H1 (cell line): ENCODE measurements at regions of chr7 and their contacts with region 1.

Region 1: DNA sequence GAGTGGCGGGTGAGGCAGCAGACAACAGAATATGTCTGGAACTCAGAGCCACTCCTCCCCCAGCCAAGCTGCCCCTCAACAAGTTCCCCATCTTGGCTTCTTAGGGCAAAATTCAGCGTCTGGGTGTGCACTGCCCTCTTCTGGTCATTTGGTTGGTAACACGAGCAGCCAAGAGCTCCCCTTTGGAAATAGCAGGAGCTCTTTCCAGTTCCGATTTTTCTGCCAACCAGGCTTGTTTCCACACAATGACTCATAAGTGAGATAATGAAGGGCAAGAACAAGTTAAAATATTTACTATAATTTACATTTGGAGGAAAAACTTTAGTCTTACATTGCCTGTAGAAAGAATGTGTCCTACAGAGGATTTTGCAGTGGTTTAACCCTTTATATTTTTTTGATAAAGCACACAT is 70.5 kb downstream of the ADCYAP1R1 start:
- DNase-seq: peak; percentile 74 to 75
- H3K4me3 ChIP-seq: no peak overlapping the region
- H3K27ac ChIP-seq: no peak overlapping the region
- H3K4me1 ChIP-seq: peaks cover 0 to 3% (median 1%) of the 10 kb centered on the region in 4 experiments; a peak in 4 of 7 replicates
- H3K27me3 ChIP-seq: no peaks in the 10 kb centered on the region; a peak in 2 of 7 replicates
- CTCF ChIP-seq: peak; percentile 68 to 95 (median 87)
- EP300 ChIP-seq: no peak
- POLR2A ChIP-seq: no peak
- RAD21 ChIP-seq: peak; percentile 93 to 96

Region 2: DNA sequence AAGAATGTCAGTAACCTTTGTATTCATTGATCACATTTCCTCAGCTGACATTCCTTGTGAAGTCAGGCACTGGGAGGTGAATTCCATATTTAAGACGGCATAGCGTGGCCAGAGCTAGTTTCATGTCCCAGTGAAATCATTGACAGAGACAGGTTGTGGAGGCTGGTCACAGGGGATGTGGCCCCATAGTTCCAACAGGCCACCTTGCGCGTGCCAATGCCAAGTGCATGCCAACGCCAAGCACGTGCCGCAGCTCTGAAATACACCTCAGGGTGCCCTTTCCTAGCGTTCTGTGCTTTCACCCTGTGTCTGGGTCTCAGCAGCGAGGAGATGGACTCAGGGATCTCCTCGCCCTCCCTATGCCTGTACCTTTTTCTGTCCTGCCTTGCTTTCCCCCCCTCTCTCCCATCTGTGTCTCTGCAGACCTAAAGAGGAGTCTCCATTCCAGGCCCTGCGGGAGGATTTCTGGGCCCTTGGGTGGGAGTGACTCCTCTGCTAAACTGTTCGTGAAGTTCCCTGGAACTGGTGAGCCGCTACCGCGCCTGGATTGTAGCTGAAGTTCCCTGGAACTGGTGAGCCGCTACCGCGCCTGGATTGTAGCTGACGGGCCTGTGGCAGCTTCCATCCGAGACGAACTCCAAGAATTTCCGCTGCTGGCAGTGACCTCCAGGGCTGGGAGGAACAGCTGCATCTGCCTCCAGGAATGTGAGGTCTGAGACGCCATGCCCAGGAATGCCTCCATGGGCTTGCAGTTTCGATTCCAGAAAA is 191.3 kb before region 1 on chr7:
- CTCF ChIA-PET with region 1: interaction called, 11 read pairs
- POLR2A ChIA-PET with region 1: no interaction called
- DNase-seq: peak in 1 of 2 experiments; percentile 37
- H3K4me3 ChIP-seq: no peak overlapping the region
- H3K27ac ChIP-seq: no peak overlapping the region
- H3K4me1 ChIP-seq: peaks cover 0 to 9% (median 6%) of the 10 kb centered on the region in 4 experiments; a peak in 6 of 7 replicates
- H3K27me3 ChIP-seq: 0 out of 7 replicates have a peak, but pooled peaks cover 0 to 8% (median 0%) of the 10 kb centered on the region in 4 experiments
- CTCF ChIP-seq: no peak
- EP300 ChIP-seq: no peak
- POLR2A ChIP-seq: no peak
- RAD21 ChIP-seq: no peak; a peak in 1 of 4 replicates

Region 3: DNA sequence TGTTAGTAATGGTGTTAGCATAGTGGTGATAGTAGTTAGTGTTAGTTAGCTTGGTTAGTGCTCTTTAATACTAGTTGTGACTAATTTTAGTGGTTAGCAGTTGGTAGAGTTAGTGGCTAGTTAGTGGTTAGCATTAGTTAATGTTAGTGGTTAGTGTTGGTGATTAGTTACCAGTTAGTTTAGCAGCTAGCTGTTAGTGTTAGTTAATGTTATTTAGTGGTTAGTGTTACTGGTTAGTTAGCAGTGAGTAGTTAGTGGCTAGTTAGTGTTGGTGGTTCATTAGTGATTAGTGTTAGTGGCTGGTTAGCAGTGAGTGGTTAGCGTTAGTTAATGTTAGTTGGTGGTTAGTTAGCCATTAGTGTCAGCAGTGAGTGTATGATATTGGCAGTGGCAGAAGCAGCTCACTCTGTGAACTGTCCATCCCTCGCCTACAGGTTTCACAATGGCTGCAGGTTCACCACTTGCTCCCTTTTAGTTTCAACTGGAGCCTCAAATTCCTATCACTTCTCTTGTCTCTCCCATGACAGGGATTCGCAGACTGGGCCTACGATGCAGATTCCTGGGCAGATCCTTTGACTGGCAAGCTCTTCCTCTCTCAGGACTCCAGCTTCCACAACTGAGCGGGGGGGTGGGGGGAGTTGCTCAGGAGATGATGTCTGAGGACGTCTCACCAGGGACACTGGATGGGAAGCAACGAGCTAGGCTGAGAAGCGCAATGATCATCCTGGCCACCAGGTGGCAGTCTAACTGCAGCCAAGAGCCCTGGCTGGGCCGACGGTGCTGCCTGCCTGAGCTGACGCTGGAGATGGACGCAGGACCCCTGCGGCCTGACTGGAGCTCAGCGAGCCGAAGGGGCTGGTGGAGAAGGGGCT is 139.4 kb before region 1 on chr7:
- CTCF ChIA-PET with region 1: interaction called, 517 read pairs
- POLR2A ChIA-PET with region 1: interaction called, 17 read pairs
- DNase-seq: peak; percentile 90 to 99
- H3K4me3 ChIP-seq: peak overlapping the region in 1 of 4 experiments; percentile 59; a peak in 1 of 8 replicates
- H3K27ac ChIP-seq: no peak overlapping the region
- H3K4me1 ChIP-seq: peaks cover 13 to 41% (median 30%) of the 10 kb centered on the region in 4 experiments
- H3K27me3 ChIP-seq: peaks cover 0 to 7% (median 2%) of the 10 kb centered on the region in 4 experiments; a peak in 3 of 7 replicates
- CTCF ChIP-seq: peak; percentile 94 to 99 (median 99)
- EP300 ChIP-seq: no peak
- POLR2A ChIP-seq: no peak
- RAD21 ChIP-seq: peak; percentile 96 to 97

Region 4: DNA sequence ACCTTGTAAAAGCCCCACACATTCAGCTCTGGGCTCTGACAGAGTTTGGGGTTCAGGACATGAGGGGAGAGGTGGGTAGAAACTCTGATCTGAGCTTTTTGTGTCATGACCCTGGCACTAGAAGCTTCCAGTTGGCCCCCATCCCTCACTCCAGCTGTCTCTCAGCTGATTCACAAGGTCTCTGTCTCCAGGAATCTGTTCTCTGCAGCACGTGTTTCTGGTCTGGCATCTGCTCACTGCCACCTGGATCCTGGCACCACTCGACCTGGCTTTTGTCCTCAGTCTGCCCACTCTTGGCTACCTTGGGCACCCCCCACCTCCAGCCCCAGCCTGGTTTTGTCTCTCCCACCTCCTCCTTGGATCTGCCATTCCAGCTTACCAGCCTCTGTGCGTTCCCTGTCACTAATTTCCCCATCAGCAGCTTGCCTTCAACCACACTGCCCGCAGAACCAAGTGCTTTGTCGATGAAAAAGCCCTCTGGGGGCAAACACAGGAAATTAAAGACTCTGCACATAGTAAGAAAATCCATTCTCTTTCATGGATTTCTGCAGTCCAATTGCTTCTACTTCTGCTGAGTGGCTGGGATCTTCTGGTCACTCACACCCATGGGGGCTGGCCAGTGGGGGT is 88.9 kb before region 1 on chr7:
- CTCF ChIA-PET with region 1: interaction called, 14 read pairs
- POLR2A ChIA-PET with region 1: no interaction called
- DNase-seq: no peak
- H3K4me3 ChIP-seq: no peak overlapping the region
- H3K27ac ChIP-seq: no peak overlapping the region
- H3K4me1 ChIP-seq: no peaks in the 10 kb centered on the region; a peak in 1 of 7 replicates
- H3K27me3 ChIP-seq: no peaks in the 10 kb centered on the region; a peak in 1 of 7 replicates
- CTCF ChIP-seq: no peak
- EP300 ChIP-seq: no peak
- POLR2A ChIP-seq: no peak
- RAD21 ChIP-seq: no peak

Region 5: DNA sequence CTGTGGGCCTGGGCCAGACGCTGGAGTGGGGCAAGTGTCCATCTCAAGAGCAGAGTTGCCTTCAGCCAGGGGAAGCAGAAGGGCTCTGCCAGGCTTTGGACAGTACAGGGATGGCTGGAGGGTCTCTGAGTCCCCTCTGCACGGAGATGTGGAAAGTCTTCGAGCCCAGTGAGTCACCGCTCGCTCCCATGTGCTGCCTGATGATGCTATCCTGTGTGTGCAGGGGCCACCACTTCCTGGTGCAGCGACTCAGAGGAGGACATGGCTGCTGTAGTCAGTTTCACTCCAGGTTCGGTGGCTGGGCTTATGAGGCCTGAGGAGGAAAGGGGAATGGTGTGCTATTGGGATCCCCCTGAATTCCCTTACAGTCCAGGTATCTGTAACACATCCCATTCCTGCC is 64.5 kb before region 1 on chr7:
- CTCF ChIA-PET with region 1: interaction called, 215 read pairs
- POLR2A ChIA-PET with region 1: interaction called, 6 read pairs
- DNase-seq: no peak
- H3K4me3 ChIP-seq: no peak overlapping the region
- H3K27ac ChIP-seq: no peak overlapping the region
- H3K4me1 ChIP-seq: peaks cover 0 to 12% (median 8%) of the 10 kb centered on the region in 4 experiments; a peak in 5 of 7 replicates
- H3K27me3 ChIP-seq: peaks cover 3 to 12% (median 11%) of the 10 kb centered on the region in 4 experiments; a peak in 6 of 7 replicates
- CTCF ChIP-seq: no peak
- EP300 ChIP-seq: no peak
- POLR2A ChIP-seq: no peak
- RAD21 ChIP-seq: no peak

Region 6: GRCh38 chr7:31100445-31100844 is 22.2 kb before region 1 on chr7:
- CTCF ChIA-PET with region 1: interaction called, 162 read pairs
- POLR2A ChIA-PET with region 1: interaction called, 3 read pairs
- DNase-seq: no peak
- H3K4me3 ChIP-seq: no peak overlapping the region
- H3K27ac ChIP-seq: no peak overlapping the region
- H3K4me1 ChIP-seq: no peaks in the 10 kb centered on the region
- H3K27me3 ChIP-seq: no peaks in the 10 kb centered on the region
- CTCF ChIP-seq: no peak
- EP300 ChIP-seq: no peak
- POLR2A ChIP-seq: no peak
- RAD21 ChIP-seq: no peak

Region 7: DNA sequence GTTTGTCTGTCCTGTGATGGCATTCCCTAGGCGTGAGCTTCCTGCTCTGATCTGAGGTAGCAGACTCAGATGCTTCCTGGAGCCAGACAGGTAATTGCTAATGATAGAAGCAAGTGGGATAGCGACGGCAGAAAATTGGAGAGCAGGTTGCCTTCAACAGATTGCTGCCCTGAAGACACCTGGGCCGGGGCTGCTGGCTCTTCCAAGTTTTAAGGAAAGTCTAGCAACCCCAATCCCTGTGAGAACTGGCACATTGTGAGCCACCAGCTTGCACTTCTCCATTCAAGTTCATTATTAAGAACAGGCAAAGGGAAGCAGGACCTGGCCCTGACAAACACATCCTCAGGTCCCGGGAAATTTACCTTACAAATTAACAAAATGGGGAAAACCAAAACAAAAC is 442.0 kb after region 1 on chr7:
- CTCF ChIA-PET with region 1: no interaction called
- POLR2A ChIA-PET with region 1: no interaction called
- DNase-seq: no peak
- H3K4me3 ChIP-seq: no peak overlapping the region
- H3K27ac ChIP-seq: no peak overlapping the region
- H3K4me1 ChIP-seq: peaks cover 0 to 11% (median 4%) of the 10 kb centered on the region in 4 experiments; a peak in 4 of 7 replicates
- H3K27me3 ChIP-seq: no peaks in the 10 kb centered on the region; a peak in 1 of 7 replicates
- CTCF ChIP-seq: no peak
- EP300 ChIP-seq: no peak
- POLR2A ChIP-seq: no peak
- RAD21 ChIP-seq: no peak